CD8-positive, alpha-beta T cell (primary cell): ENCODE measurements at regions of chr17 and their contacts with region 1.

Region 1: GRCh38 chr17:78272181-78272913 is 40.9 kb downstream of the TMEM235 start:
- DNase-seq: peak in 6 of 9 experiments; percentile 34 to 89 (median 67)
- ATAC-seq: peak; percentile 90
- H3K4me3 ChIP-seq: no peak overlapping the region
- H3K4me3 Mint-ChIP-seq: peak overlapping the region; percentile 42
- H3K27ac ChIP-seq: peak overlapping the region in 1 of 2 experiments; percentile 3
- H3K27ac Mint-ChIP-seq: peak overlapping the region; percentile 93
- H3K4me1 ChIP-seq: peaks cover 42% of the 10 kb centered on the region
- H3K4me1 Mint-ChIP-seq: peaks cover 37% of the 10 kb centered on the region
- H3K27me3 ChIP-seq: peaks cover 0 to 3% of the 10 kb centered on the region in 2 experiments
- H3K27me3 Mint-ChIP-seq: no peaks in the 10 kb centered on the region
- CTCF ChIP-seq: no peak

Region 2: DNA sequence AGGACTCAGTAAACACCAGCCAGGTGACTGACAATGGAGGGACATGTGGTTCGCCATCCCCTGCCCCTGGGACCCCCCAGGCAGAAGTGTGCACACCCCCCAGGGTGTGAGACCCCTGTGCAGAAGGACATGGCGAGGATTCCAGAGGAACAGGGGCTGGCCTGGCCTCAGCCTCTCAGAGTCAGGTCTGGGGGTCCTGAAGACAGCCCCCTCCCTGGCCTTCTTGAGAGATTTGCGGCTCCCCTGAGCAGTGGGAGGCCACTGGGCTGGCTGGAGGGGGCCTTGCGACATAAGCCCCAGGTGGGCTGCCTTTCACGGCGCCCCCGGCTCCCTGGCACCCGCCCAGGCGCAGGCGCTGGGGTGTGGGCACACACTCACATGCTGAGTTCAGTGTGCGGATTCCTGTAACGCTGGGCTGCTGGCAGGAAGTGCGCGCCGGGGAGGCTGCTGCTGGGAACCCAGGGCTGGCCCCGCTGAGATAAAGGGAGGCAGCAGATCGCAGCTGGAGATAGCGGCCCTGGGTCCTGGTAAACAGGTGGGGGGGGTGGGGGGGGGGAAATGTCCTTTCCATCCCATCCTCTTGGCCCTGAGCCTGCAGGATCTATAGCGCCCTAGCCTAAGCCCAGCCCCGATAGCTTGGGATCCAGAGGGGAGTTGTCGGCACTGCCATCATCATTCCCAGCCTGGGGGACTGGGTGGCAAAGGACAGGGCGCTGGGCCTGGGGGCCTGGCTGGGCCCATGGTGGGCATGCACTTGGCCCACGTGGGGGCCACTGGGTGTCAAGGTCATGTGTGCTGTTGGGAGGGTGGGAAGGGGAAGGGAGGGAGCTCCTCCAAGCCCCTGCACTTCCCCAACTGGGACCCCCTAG is 13.8 kb before region 1 on chr17:
- CTCF ChIA-PET with region 1: interaction called, 5 read pairs
- POLR2A ChIA-PET with region 1: interaction called, 3 read pairs
- intact Hi-C with region 1: loop called in 1 of 2 experiments (anchors 2 kb)
- DNase-seq: peak; percentile 45 to 81 (median 73)
- ATAC-seq: peak; percentile 65
- H3K4me3 ChIP-seq: peak overlapping the region; percentile 10 to 53
- H3K4me3 Mint-ChIP-seq: peak overlapping the region; percentile 81
- H3K27ac ChIP-seq: peak overlapping the region in 1 of 2 experiments; percentile 69
- H3K27ac Mint-ChIP-seq: peak overlapping the region; percentile 92
- H3K4me1 ChIP-seq: peaks cover 54% of the 10 kb centered on the region
- H3K4me1 Mint-ChIP-seq: peaks cover 63% of the 10 kb centered on the region
- H3K27me3 ChIP-seq: no peaks in the 10 kb centered on the region
- H3K27me3 Mint-ChIP-seq: no peaks in the 10 kb centered on the region
- CTCF ChIP-seq: no peak